ENCODE measurements at regions of chr7 and their contacts with region 1.

Region 1: GRCh38 chr7:23298885-23299769 is at the start of gene MALSU1:
- DNase-seq: peak; percentile 94 to 95 (median 95)
- H3K4me3 ChIP-seq: peak within 1 kb of the TSS; percentile 85 to 93
- H3K4me3 Mint-ChIP-seq: peak within 1 kb of the TSS; percentile 90 to 96 (median 94)
- H3K27ac ChIP-seq: peak within 1 kb of the TSS; percentile 79
- H3K27ac Mint-ChIP-seq: peak within 1 kb of the TSS; percentile 73 to 100 (median 97)
- H3K4me1 ChIP-seq: peaks cover 41% of the 10 kb centered on the region
- H3K4me1 Mint-ChIP-seq: peaks cover 29 to 56% (median 45%) of the 10 kb centered on the region in 4 donors
- H3K27me3 ChIP-seq: no peaks in the 10 kb centered on the region
- H3K27me3 Mint-ChIP-seq: peaks cover 0 to 3% of the 10 kb centered on the region in 2 donors
- total RNA-seq, gene MALSU1: 39.3 to 46.5 TPM

Region 2: GRCh38 chr7:22822486-22823141 is 476.5 kb before region 1 on chr7 and contains the start of gene TOMM7:
- CTCF ChIA-PET with region 1: no interaction called
- POLR2A ChIA-PET with region 1: no interaction called
- intact Hi-C with region 1: loop called (anchors 10 kb)
- DNase-seq: peak; percentile 84 to 92 (median 91)
- H3K4me3 ChIP-seq: peak within 1 kb of the TSS; percentile 83 to 98
- H3K4me3 Mint-ChIP-seq: peak within 1 kb of the TSS; percentile 94 to 99 (median 98)
- H3K27ac ChIP-seq: peak within 1 kb of the TSS; percentile 85
- H3K27ac Mint-ChIP-seq: peak within 1 kb of the TSS; percentile 94 to 100 (median 98)
- H3K4me1 ChIP-seq: peaks cover 40% of the 10 kb centered on the region
- H3K4me1 Mint-ChIP-seq: peaks cover 19 to 50% (median 33%) of the 10 kb centered on the region in 4 donors
- H3K27me3 ChIP-seq: no peaks in the 10 kb centered on the region
- H3K27me3 Mint-ChIP-seq: peaks cover 5 to 17% of the 10 kb centered on the region in 2 donors
- total RNA-seq, gene TOMM7: 686 to 701 TPM

Region 3: GRCh38 chr7:23105644-23106056 is 193.5 kb before region 1 on chr7 and contains the start of gene KLHL7:
- CTCF ChIA-PET with region 1: no interaction called
- POLR2A ChIA-PET with region 1: interaction called, 10 read pairs
- intact Hi-C with region 1: loop called (anchors 1 kb)
- DNase-seq: peak; percentile 91 to 96 (median 93)
- H3K4me3 ChIP-seq: peak within 1 kb of the TSS; percentile 83 to 98
- H3K4me3 Mint-ChIP-seq: peak within 1 kb of the TSS; percentile 93 to 99 (median 97)
- H3K27ac ChIP-seq: peak within 1 kb of the TSS; percentile 89
- H3K27ac Mint-ChIP-seq: peak within 1 kb of the TSS; percentile 93 to 98 (median 96)
- H3K4me1 ChIP-seq: peaks cover 39% of the 10 kb centered on the region
- H3K4me1 Mint-ChIP-seq: peaks cover 28 to 56% (median 38%) of the 10 kb centered on the region in 4 donors
- H3K27me3 ChIP-seq: no peaks in the 10 kb centered on the region
- H3K27me3 Mint-ChIP-seq: no peaks in the 10 kb centered on the region
- total RNA-seq, gene KLHL7: 22.5 to 25.6 TPM

Region 4: GRCh38 chr7:23273141-23273599 is 26.0 kb before region 1 on chr7:
- CTCF ChIA-PET with region 1: interaction called, 25 read pairs
- POLR2A ChIA-PET with region 1: interaction called, 7 read pairs
- intact Hi-C with region 1: loop called (anchors 1 kb)
- DNase-seq: peak; percentile 77 to 90 (median 80)
- H3K4me3 ChIP-seq: no peak overlapping the region
- H3K4me3 Mint-ChIP-seq: peak overlapping the region in 7 of 8 donors; percentile 24 to 69 (median 65)
- H3K27ac ChIP-seq: no peak overlapping the region
- H3K27ac Mint-ChIP-seq: peak overlapping the region in 3 of 7 donors; percentile 4 to 18 (median 12)
- H3K4me1 ChIP-seq: peaks cover 4% of the 10 kb centered on the region
- H3K4me1 Mint-ChIP-seq: peaks cover 0 to 15% (median 7%) of the 10 kb centered on the region in 4 donors
- H3K27me3 ChIP-seq: no peaks in the 10 kb centered on the region
- H3K27me3 Mint-ChIP-seq: peaks cover 0 to 6% of the 10 kb centered on the region in 2 donors

Region 5: GRCh38 chr7:23531794-23532489 is 232.8 kb after region 1 on chr7 and contains the start of gene TRA2A:
- CTCF ChIA-PET with region 1: no interaction called
- POLR2A ChIA-PET with region 1: interaction called, 13 read pairs
- intact Hi-C with region 1: loop called (anchors 1 kb)
- DNase-seq: peak; percentile 92 to 96 (median 95)
- H3K4me3 ChIP-seq: peak within 1 kb of the TSS; percentile 67 to 90
- H3K4me3 Mint-ChIP-seq: peak within 1 kb of the TSS; percentile 98 to 100 (median 99)
- H3K27ac ChIP-seq: peak within 1 kb of the TSS; percentile 96
- H3K27ac Mint-ChIP-seq: peak within 1 kb of the TSS; percentile 100
- H3K4me1 ChIP-seq: peaks cover 40% of the 10 kb centered on the region
- H3K4me1 Mint-ChIP-seq: peaks cover 28 to 52% (median 40%) of the 10 kb centered on the region in 4 donors
- H3K27me3 ChIP-seq: no peaks in the 10 kb centered on the region
- H3K27me3 Mint-ChIP-seq: no peaks in the 10 kb centered on the region
- total RNA-seq, gene TRA2A: 143 to 145 TPM

Region 6: GRCh38 chr7:23597094-23598091 is 298.3 kb after region 1 on chr7 and contains the start of gene CCDC126:
- CTCF ChIA-PET with region 1: no interaction called
- POLR2A ChIA-PET with region 1: interaction called, 3 read pairs
- intact Hi-C with region 1: loop called (anchors 1 kb)
- DNase-seq: peak; percentile 73 to 80 (median 74)
- H3K4me3 ChIP-seq: peak within 1 kb of the TSS; percentile 61 to 67
- H3K4me3 Mint-ChIP-seq: peak within 1 kb of the TSS; percentile 86 to 96 (median 92)
- H3K27ac ChIP-seq: peak within 1 kb of the TSS; percentile 79
- H3K27ac Mint-ChIP-seq: peak within 1 kb of the TSS; percentile 47 to 91 (median 88)
- H3K4me1 ChIP-seq: peaks cover 19% of the 10 kb centered on the region
- H3K4me1 Mint-ChIP-seq: peaks cover 21 to 40% (median 35%) of the 10 kb centered on the region in 4 donors
- H3K27me3 ChIP-seq: no peaks in the 10 kb centered on the region
- H3K27me3 Mint-ChIP-seq: no peaks in the 10 kb centered on the region
- total RNA-seq, gene CCDC126: 15.5 to 17.7 TPM

Region 7: GRCh38 chr7:24442170-24442777 is 1143.1 kb after region 1 on chr7:
- CTCF ChIA-PET with region 1: no interaction called
- POLR2A ChIA-PET with region 1: no interaction called
- intact Hi-C with region 1: no loop called
- DNase-seq: no peak
- H3K4me3 ChIP-seq: no peak overlapping the region
- H3K4me3 Mint-ChIP-seq: no peak overlapping the region
- H3K27ac ChIP-seq: no peak overlapping the region
- H3K27ac Mint-ChIP-seq: no peak overlapping the region
- H3K4me1 ChIP-seq: no peaks in the 10 kb centered on the region
- H3K4me1 Mint-ChIP-seq: peaks cover 0 to 7% (median 4%) of the 10 kb centered on the region in 4 donors
- H3K27me3 ChIP-seq: no peaks in the 10 kb centered on the region
- H3K27me3 Mint-ChIP-seq: peaks cover 0 to 4% of the 10 kb centered on the region in 2 donors

Region 8: GRCh38 chr7:24572997-24573625 is 1274.0 kb after region 1 on chr7 and contains the start of gene PALS2:
- CTCF ChIA-PET with region 1: no interaction called
- POLR2A ChIA-PET with region 1: no interaction called
- intact Hi-C with region 1: loop called (anchors 1 kb)
- DNase-seq: peak; percentile 81 to 87 (median 83)
- H3K4me3 ChIP-seq: peak within 1 kb of the TSS; percentile 62 to 66
- H3K4me3 Mint-ChIP-seq: peak within 1 kb of the TSS; percentile 92 to 99 (median 94)
- H3K27ac ChIP-seq: peak within 1 kb of the TSS; percentile 56
- H3K27ac Mint-ChIP-seq: peak within 1 kb of the TSS; percentile 86 to 95 (median 92)
- H3K4me1 ChIP-seq: peaks cover 32% of the 10 kb centered on the region
- H3K4me1 Mint-ChIP-seq: peaks cover 20 to 38% (median 28%) of the 10 kb centered on the region in 4 donors
- H3K27me3 ChIP-seq: no peaks in the 10 kb centered on the region
- H3K27me3 Mint-ChIP-seq: peaks cover 2 to 4% of the 10 kb centered on the region in 2 donors
- total RNA-seq, gene PALS2: 32.9 to 50.1 TPM

Measured in CD4-positive, alpha-beta memory T cell (primary cell).